ENCODE measurements at regions of chrX and their contacts with region 1.

Region 1: GRCh38 chrX:76253432-76253831 is 80.6 kb downstream of the PBDC1 start:
- DNase-seq: peak; percentile 45
- ATAC-seq: peak; percentile 89
- H3K4me3 ChIP-seq: no peak overlapping the region
- H3K27ac ChIP-seq: no peak overlapping the region
- H3K4me1 ChIP-seq: no peaks in the 10 kb centered on the region
- H3K27me3 ChIP-seq: no peaks in the 10 kb centered on the region
- CTCF ChIP-seq: peak; percentile 63
- EP300 ChIP-seq: no peak
- POLR2A ChIP-seq: no peak
- RAD21 ChIP-seq: peak; percentile 43

Region 2: GRCh38 chrX:76148753-76149152 is 104.7 kb before region 1 on chrX:
- CTCF ChIA-PET with region 1: no interaction called
- POLR2A ChIA-PET with region 1: no interaction called
- in situ Hi-C with region 1: loop called (anchors 25 kb)
- intact Hi-C with region 1: loop called (anchors 5 kb)
- DNase-seq: peak; percentile 17
- ATAC-seq: peak; percentile 21
- H3K4me3 ChIP-seq: peak overlapping the region; percentile 49 to 64 (median 54)
- H3K27ac ChIP-seq: peak overlapping the region; percentile 63
- H3K4me1 ChIP-seq: no peaks in the 10 kb centered on the region
- H3K27me3 ChIP-seq: no peaks in the 10 kb centered on the region
- CTCF ChIP-seq: no peak
- EP300 ChIP-seq: no peak
- POLR2A ChIP-seq: no peak
- RAD21 ChIP-seq: no peak

Region 3: DNA sequence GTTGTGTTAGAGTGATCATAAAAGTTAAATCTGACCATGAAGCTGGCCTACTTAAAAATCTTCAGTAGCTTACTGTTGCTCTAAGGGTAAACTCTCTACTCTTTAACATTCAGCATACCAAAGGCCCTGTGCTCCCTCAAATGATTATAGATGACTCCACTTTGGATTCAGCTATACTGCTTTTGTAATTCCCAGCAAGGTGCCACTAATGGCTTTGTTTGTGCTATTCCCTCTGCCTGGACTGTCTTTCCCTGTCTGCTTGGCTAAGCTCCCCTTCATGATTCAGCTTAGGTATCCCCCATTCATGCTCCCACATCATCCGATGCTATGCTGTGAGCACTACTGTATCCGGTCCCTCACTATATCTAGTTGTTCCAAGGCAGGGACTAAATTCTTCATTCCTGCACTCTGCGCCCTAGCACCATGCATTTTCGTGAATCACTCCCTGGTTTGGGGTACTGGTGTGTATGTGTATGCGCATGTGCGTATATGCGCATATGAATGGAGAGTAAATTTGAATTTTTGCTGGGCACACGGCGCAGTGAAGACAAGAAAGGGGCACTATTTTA is 81.0 kb before region 1 on chrX:
- CTCF ChIA-PET with region 1: no interaction called
- POLR2A ChIA-PET with region 1: interaction called, 3 read pairs
- in situ Hi-C with region 1: loop called (anchors 25 kb)
- intact Hi-C with region 1: loop called (anchors 5 kb)
- DNase-seq: no peak
- ATAC-seq: peak; percentile 78
- H3K4me3 ChIP-seq: peak overlapping the region; percentile 70 to 74 (median 71); a peak in 5 of 6 replicates
- H3K27ac ChIP-seq: peak overlapping the region; percentile 83
- H3K4me1 ChIP-seq: peaks cover 22% of the 10 kb centered on the region
- H3K27me3 ChIP-seq: no peaks in the 10 kb centered on the region
- CTCF ChIP-seq: no peak
- EP300 ChIP-seq: no peak
- POLR2A ChIP-seq: no peak
- RAD21 ChIP-seq: no peak